PC-3 (cell line): ENCODE measurements at regions of chr7 and their contacts with region 1.

Region 1: GRCh38 chr7:17298207-17298839 is at the start of gene AHR:
- DNase-seq: peak; percentile 89
- ATAC-seq: peak; percentile 72
- H3K4me3 ChIP-seq: peak within 1 kb of the TSS; percentile 94
- H3K27ac ChIP-seq: peak within 1 kb of the TSS; percentile 75
- H3K4me1 ChIP-seq: peaks cover 17% of the 10 kb centered on the region
- H3K27me3 ChIP-seq: no peaks in the 10 kb centered on the region
- CTCF ChIP-seq: no peak
- total RNA-seq, gene AHR: 62.5 and 72.7 TPM in 2 replicates

Region 2: DNA sequence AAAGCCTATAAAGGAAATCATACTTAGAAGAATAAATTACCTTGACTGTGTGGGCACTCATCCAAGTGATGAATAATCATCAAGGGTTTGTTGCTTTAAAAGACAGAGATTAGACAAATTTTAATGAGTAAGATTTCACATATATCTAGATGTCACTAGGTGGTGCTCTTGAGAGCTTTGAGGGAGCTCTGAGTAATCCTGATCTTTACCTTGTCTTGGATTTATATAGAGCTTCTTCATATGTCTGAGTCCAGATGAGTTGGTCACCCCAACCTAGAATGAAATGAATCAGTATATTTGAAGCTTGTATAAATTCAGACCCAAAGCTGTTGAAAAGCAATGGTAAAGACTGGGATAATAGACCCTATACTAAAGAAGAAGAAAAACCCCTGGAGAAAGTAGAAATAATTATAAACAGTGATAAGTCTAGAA is 497.2 kb before region 1 on chr7:
- CTCF ChIA-PET with region 1: no interaction called
- POLR2A ChIA-PET with region 1: interaction called, 12 read pairs
- intact Hi-C with region 1: loop called (anchors 10 kb)
- DNase-seq: peak; percentile 94
- ATAC-seq: peak; percentile 50
- H3K4me3 ChIP-seq: no peak overlapping the region
- H3K27ac ChIP-seq: peak overlapping the region; percentile 35
- H3K4me1 ChIP-seq: peaks cover 55% of the 10 kb centered on the region
- H3K27me3 ChIP-seq: no peaks in the 10 kb centered on the region
- CTCF ChIP-seq: peak; percentile 78

Region 3: GRCh38 chr7:16960337-16960965 is 337.9 kb before region 1 on chr7:
- CTCF ChIA-PET with region 1: no interaction called
- POLR2A ChIA-PET with region 1: interaction called, 14 read pairs
- intact Hi-C with region 1: no loop called
- DNase-seq: no peak
- ATAC-seq: no peak
- H3K4me3 ChIP-seq: no peak overlapping the region
- H3K27ac ChIP-seq: no peak overlapping the region
- H3K4me1 ChIP-seq: no peaks in the 10 kb centered on the region
- H3K27me3 ChIP-seq: no peaks in the 10 kb centered on the region
- CTCF ChIP-seq: no peak

Region 4: DNA sequence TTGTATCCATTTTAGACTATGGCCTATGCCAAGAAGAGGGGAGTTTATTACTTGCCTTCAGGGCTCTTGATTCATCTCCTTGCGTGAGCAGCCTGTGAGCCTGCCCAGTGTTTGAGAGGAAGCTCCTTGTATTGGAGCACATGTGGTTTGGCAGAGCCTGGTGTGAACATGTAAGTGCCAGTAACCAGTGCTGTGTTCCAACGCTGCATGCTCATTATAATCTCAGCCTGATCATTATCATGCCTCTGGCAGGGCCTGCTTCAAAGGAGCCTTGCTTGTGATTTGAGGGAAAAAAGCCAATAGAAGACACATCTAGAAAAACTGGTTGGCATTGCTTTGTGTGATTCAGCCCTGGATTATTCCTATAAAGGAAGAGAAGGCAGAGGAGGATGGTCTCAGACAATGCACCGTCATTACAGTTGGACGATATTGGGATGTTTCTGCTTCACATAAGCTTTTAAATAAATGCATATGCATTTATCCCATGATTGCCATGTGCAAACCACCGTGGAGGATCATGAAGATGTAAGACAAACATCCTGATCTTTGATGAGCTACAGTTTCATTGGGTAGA is 203.2 kb before region 1 on chr7:
- CTCF ChIA-PET with region 1: interaction called, 3 read pairs
- POLR2A ChIA-PET with region 1: no interaction called
- intact Hi-C with region 1: loop called (anchors 5 kb)
- DNase-seq: peak; percentile 97
- ATAC-seq: peak; percentile 83
- H3K4me3 ChIP-seq: no peak overlapping the region
- H3K27ac ChIP-seq: peak overlapping the region; percentile 94
- H3K4me1 ChIP-seq: peaks cover 62% of the 10 kb centered on the region
- H3K27me3 ChIP-seq: no peaks in the 10 kb centered on the region
- CTCF ChIP-seq: no peak

Region 5: DNA sequence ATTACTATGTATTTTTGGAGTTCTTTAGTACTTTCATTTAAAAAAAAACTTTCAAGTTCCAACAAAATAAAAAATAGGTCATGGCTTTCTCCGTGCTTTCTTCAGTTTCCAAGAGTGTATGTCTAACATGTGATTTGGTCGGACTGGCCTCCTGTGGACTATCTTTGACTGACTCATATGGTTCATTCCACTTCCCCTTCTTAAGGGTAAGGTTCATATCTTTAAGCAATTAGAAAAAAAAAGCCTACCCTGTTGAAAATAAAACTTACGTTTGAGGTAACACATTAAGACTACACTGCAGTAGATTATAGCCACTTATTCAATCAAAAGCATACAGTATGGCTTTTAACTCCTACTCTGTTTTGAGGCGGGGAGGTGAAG is 112.6 kb before region 1 on chr7:
- CTCF ChIA-PET with region 1: no interaction called
- POLR2A ChIA-PET with region 1: interaction called, 4 read pairs
- intact Hi-C with region 1: loop called (anchors 5 kb)
- DNase-seq: peak; percentile 65
- ATAC-seq: peak; percentile 93
- H3K4me3 ChIP-seq: no peak overlapping the region
- H3K27ac ChIP-seq: peak overlapping the region; percentile 85
- H3K4me1 ChIP-seq: peaks cover 22% of the 10 kb centered on the region
- H3K27me3 ChIP-seq: no peaks in the 10 kb centered on the region
- CTCF ChIP-seq: no peak

Region 6: DNA sequence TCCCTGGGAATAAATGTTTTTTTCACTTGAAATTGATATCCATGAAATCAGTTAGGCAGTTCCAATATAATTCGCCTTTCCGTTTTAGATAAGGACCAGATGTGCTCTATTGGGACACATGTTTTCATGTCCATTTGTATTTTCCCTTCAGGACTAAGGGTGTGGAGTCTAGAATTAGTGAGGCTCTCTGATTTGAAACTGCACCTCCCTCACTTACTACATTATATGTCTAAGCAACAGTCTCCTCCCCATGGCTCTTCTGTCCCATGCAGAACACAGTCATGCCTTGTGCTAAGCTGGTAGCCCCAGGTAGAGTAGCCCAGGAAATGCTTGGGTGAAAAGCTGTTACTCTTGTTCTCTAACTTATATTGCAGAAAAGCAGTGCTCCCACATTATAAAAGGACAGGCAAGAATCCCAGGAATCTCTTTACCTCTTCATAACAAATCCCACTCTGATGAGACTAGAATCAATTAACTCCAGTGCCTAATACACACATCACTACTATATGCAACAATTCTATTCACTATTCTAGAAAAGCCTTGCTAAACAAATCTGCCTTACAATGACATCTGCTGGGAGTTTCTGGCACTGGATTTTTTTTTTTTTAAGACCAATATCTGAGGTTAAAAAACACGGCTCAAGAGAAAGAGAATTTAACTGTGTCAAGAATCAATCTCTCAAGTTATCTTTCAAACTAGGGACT is 348.1 kb after region 1 on chr7:
- CTCF ChIA-PET with region 1: interaction called, 3 read pairs
- POLR2A ChIA-PET with region 1: interaction called, 4 read pairs
- intact Hi-C with region 1: loop called (anchors 1 kb)
- DNase-seq: peak; percentile 54
- ATAC-seq: peak; percentile 87
- H3K4me3 ChIP-seq: no peak overlapping the region
- H3K27ac ChIP-seq: no peak overlapping the region
- H3K4me1 ChIP-seq: peaks cover 8% of the 10 kb centered on the region
- H3K27me3 ChIP-seq: no peaks in the 10 kb centered on the region
- CTCF ChIP-seq: peak; percentile 77